ENCODE measurements at regions of chr1 and their contacts with region 1.

Region 1: DNA sequence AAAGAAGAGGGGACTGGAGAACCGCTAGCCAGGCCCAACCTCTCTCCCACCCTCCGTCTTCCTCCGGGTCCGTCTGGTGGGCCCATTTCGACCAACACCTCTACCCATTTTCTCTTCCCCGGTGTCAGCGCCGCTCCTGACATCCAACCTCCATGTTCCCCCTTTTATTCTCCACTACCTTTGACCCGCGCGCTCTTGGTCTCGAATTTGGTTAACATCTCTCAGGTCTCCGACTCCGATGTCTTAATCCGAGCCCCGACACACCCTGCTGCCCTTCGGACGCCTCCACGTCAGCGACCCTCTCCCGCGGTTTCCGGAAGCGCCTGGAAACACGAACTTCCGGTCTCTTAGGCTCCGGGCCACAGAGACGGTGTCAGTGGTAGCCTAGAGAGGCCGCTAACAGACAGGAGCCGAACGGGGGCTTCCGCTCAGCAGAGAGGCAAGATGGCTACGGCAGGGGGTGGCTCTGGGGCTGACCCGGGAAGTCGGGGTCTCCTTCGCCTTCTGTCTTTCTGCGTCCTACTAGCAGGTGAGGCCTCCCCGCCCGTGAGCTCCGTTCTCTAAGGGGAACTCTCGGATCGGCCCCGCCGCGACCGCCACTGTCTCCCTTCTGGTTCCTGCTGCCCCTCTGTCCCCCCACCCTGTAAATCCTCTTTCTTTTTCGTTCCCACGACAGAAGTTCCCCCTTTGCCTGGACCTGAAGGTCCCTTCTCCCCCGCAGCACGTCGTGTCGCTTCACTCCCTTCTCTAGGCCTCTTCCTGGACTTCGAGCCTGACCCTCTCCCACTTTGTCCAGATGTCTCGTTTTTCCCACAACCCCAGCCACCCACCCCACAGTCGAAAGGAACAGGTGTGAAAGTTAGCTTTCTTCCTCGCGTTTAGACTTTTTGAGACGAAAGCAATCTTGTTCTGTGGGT is at the starts of genes COPA and NCSTN:
- DNase-seq: peak; percentile 83
- ATAC-seq: peak; percentile 88
- H3K4me3 Mint-ChIP-seq: peak within 1 kb of the TSS; percentile 99
- H3K27ac Mint-ChIP-seq: peak within 1 kb of the TSS; percentile 98
- H3K4me1 Mint-ChIP-seq: peaks cover 68% of the 10 kb centered on the region
- H3K27me3 Mint-ChIP-seq: no peaks in the 10 kb centered on the region
- CTCF ChIP-seq: no peak
- total RNA-seq, gene COPA: 161 and 174 TPM in 2 replicates
- total RNA-seq, gene NCSTN: 108 and 118 TPM in 2 replicates

Region 2: DNA sequence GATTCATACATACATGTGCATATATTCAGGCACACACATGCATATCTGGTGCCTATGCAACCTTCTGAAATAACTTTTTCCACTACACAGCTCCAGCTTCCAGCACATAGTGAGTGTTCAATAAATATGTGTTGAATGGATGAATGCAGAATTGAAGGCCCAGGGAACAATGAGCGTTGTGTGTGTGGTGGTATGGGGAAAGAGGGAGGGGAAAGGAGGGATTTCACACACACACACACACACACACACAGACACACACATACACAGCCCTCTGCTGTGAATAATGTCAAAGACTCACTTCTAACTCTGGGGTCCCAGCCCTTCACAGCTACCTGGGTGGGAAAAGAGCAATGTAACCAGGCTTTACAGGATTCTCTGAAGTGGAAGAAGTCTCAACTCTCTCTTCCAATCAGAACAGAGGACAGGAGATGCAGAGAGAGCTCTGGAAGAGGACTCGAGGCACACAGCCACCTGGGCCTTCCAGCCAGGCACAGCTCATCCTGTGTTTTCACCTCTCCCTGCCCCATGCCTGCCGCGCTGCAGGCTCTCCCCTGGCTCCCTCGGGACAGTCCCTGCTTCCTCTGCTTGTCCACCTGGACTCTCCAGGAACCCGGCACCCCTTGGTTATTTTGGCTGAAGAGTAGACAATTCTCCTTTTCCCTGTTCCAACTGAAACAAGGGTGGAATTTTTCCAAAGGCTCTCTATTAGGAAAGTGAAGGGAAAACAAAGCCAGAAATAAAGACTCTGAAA is 239.4 kb before region 1 on chr1:
- CTCF ChIA-PET with region 1: no interaction called
- POLR2A ChIA-PET with region 1: no interaction called
- intact Hi-C with region 1: no loop called
- DNase-seq: no peak
- ATAC-seq: no peak
- H3K4me3 Mint-ChIP-seq: no peak overlapping the region
- H3K27ac Mint-ChIP-seq: no peak overlapping the region
- H3K4me1 Mint-ChIP-seq: peaks cover 21% of the 10 kb centered on the region
- H3K27me3 Mint-ChIP-seq: peaks cover 2% of the 10 kb centered on the region
- CTCF ChIP-seq: no peak

Region 3: DNA sequence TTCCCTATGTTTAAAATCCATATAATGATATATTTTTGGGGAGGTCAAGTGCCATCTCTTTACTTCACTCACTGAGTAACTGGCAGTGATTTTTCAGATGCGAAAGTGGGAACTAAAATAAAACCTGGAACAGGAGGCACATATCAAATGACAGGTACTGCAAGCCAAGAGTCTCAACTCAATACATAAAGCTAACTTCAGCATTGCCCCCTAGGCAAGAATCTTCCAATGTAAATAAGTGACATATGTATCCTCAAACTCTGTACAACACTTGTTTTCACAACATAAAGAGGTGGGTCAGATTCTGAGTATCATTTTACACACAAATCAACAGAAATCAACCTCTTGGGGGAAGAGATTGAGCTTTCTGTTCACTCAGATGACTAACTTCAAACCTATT is 99.0 kb before region 1 on chr1:
- CTCF ChIA-PET with region 1: no interaction called
- POLR2A ChIA-PET with region 1: interaction called, 10 read pairs
- intact Hi-C with region 1: no loop called
- DNase-seq: no peak
- ATAC-seq: no peak
- H3K4me3 Mint-ChIP-seq: no peak overlapping the region
- H3K27ac Mint-ChIP-seq: no peak overlapping the region
- H3K4me1 Mint-ChIP-seq: no peaks in the 10 kb centered on the region
- H3K27me3 Mint-ChIP-seq: no peaks in the 10 kb centered on the region
- CTCF ChIP-seq: no peak

Region 4: GRCh38 chr1:160307118-160307854 is 35.9 kb before region 1 on chr1:
- CTCF ChIA-PET with region 1: no interaction called
- POLR2A ChIA-PET with region 1: interaction called, 6 read pairs
- intact Hi-C with region 1: loop called (anchors 5 kb)
- DNase-seq: peak; percentile 22
- ATAC-seq: peak; percentile 96
- H3K4me3 Mint-ChIP-seq: no peak overlapping the region
- H3K27ac Mint-ChIP-seq: peak overlapping the region; percentile 81
- H3K4me1 Mint-ChIP-seq: peaks cover 39% of the 10 kb centered on the region
- H3K27me3 Mint-ChIP-seq: no peaks in the 10 kb centered on the region
- CTCF ChIP-seq: no peak

Region 5: DNA sequence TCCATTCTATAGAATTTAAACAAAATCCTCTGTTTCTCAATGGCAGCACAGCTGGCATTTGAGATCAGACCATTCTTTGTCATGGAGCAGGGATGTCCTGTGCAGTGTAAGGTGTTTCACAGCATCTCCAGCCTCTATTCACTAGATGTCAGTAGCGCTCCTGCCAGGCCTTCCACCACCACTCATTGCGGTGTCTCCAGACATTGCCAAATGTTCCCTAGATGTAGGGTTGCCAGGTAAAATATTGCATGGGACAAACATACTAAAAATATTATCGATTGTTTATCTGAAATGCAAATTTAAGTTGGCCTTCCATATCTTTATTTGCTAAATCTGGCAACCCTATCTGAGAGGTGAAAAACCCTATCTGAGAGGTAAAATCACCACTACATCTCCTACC is 599.7 kb after region 1 on chr1:
- CTCF ChIA-PET with region 1: no interaction called
- POLR2A ChIA-PET with region 1: no interaction called
- intact Hi-C with region 1: no loop called
- DNase-seq: no peak
- ATAC-seq: no peak
- H3K4me3 Mint-ChIP-seq: no peak overlapping the region
- H3K27ac Mint-ChIP-seq: no peak overlapping the region
- H3K4me1 Mint-ChIP-seq: no peaks in the 10 kb centered on the region
- H3K27me3 Mint-ChIP-seq: peaks cover 5% of the 10 kb centered on the region
- CTCF ChIP-seq: no peak

Measured in activated B cell treated with CpG ODN at 0.5 μM for 24 hours (primary cell).